H1 (cell line): ENCODE measurements at regions of chr1 and their contacts with region 1.

Region 1: GRCh38 chr1:46179138-46180081 is 3.1 kb upstream of the P3R3URF start:
- DNase-seq: peak; percentile 44 to 85
- H3K4me3 ChIP-seq: no peak overlapping the region
- H3K27ac ChIP-seq: no peak overlapping the region
- H3K4me1 ChIP-seq: peaks cover 2 to 15% (median 6%) of the 10 kb centered on the region in 4 experiments
- H3K27me3 ChIP-seq: no peaks in the 10 kb centered on the region; a peak in 1 of 7 replicates
- CTCF ChIP-seq: peak; percentile 62 to 93 (median 87)
- EP300 ChIP-seq: peak in 1 of 2 experiments; percentile 16; a peak in 1 of 3 replicates
- POLR2A ChIP-seq: no peak
- RAD21 ChIP-seq: peak; percentile 97 to 98

Region 2: GRCh38 chr1:46043458-46044017 is 135.9 kb before region 1 on chr1:
- CTCF ChIA-PET with region 1: interaction called, 128 read pairs
- POLR2A ChIA-PET with region 1: interaction called, 9 read pairs
- DNase-seq: peak in 1 of 2 experiments; percentile 41
- H3K4me3 ChIP-seq: no peak overlapping the region
- H3K27ac ChIP-seq: no peak overlapping the region
- H3K4me1 ChIP-seq: peaks cover 4 to 11% (median 8%) of the 10 kb centered on the region in 4 experiments; a peak in 4 of 7 replicates
- H3K27me3 ChIP-seq: no peaks in the 10 kb centered on the region; a peak in 1 of 7 replicates
- CTCF ChIP-seq: no peak
- EP300 ChIP-seq: no peak
- POLR2A ChIP-seq: no peak
- RAD21 ChIP-seq: no peak

Region 3: DNA sequence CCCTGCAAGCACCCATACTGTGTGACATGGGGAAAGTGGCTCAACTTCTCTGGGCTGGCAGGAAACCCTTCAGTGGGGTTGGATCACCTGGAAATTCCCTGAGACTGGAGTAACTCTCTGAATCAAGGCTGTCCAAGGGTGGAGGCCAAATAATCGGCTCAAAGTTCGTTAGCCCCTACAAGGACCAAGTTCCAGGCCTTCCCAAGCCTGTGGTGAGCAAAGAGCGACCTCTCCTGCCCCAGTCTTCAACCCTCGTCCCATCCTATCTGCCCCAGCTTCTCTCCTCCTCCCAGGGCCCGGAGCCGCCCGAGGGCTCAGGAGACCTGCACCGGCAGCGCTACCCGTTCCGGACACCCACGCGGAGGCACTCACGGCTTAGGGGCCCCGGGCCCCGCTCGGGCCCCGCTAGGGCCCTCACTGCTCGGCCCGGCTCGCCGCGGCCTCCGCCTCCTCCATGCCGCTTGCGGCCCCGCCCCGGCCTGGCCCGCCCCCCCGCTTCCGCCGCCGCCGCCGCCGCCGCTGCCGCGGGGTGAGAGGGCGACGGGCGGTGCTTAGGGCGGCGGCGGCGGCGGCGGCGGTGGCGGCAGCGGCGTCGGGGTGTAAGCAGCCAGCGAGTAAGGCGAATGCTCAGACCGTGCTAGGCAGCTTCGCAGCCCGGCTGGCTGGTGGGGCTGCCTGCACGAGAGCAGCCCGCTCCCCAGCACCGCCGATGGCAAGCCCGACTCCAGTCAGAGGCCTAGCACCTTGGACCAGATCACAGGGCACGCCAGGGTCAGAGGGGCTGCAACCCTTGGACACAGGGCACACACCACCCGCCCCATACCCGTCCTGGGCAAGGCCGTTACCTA is 18.8 kb after region 1 on chr1 and contains the start of gene POMGNT1:
- CTCF ChIA-PET with region 1: interaction called, 35 read pairs
- POLR2A ChIA-PET with region 1: interaction called, 6 read pairs
- DNase-seq: peak in 1 of 2 experiments; percentile 82
- H3K4me3 ChIP-seq: peak within 1 kb of the TSS; percentile 46 to 84 (median 74)
- H3K27ac ChIP-seq: no peak within 1 kb of the TSS
- H3K4me1 ChIP-seq: peaks cover 0 to 8% (median 4%) of the 10 kb centered on the region in 4 experiments; a peak in 5 of 7 replicates
- H3K27me3 ChIP-seq: no peaks in the 10 kb centered on the region
- CTCF ChIP-seq: peak in 1 of 3 experiments; percentile 21; a peak in 2 of 4 replicates
- EP300 ChIP-seq: 0 out of 3 replicates have a peak, but pooled peaks of 1 of the 2 experiments have one; percentile 25
- POLR2A ChIP-seq: peak in 1 of 2 experiments; percentile 74; a peak in 2 of 3 replicates
- RAD21 ChIP-seq: peak; percentile 40 to 41; a peak in 3 of 4 replicates
- total RNA-seq, gene POMGNT1: 37.6 and 40.3 TPM in 2 replicates